ENCODE measurements at regions of chr2 and their contacts with region 1.

Region 1: GRCh38 chr2:48946449-48947048 is 191.0 kb upstream of the LHCGR start:
- DNase-seq: peak; percentile 2
- H3K4me3 Mint-ChIP-seq: no peak overlapping the region
- H3K27ac Mint-ChIP-seq: no peak overlapping the region
- H3K4me1 Mint-ChIP-seq: no peaks in the 10 kb centered on the region
- H3K27me3 Mint-ChIP-seq: peaks cover 2% of the 10 kb centered on the region

Region 2: GRCh38 chr2:50401772-50402653 is 1455.5 kb after region 1 on chr2:
- intact Hi-C with region 1: loop called (anchors 1 kb)
- DNase-seq: no peak
- H3K4me3 Mint-ChIP-seq: no peak overlapping the region
- H3K27ac Mint-ChIP-seq: no peak overlapping the region
- H3K4me1 Mint-ChIP-seq: no peaks in the 10 kb centered on the region
- H3K27me3 Mint-ChIP-seq: no peaks in the 10 kb centered on the region

Region 3: DNA sequence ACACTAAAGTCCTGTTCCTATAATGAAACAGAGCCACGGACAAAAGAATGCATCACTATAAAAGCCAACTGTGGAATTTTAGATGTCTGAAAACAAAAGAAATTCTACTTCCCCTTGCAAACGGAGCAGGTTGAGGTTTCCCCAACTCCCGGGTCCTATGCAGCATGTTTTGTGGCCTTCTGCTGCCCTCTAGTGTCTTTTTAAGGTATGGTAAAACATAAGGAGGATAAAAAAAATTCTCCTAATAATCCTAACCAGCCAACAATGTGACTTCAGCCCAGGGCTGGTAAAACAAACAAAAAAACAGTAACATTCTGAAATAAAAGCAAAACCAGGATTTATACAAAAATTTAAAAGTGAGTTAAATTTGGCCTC is 1545.9 kb after region 1 on chr2:
- intact Hi-C with region 1: loop called (anchors 1 kb)
- DNase-seq: no peak
- H3K4me3 Mint-ChIP-seq: no peak overlapping the region
- H3K27ac Mint-ChIP-seq: no peak overlapping the region
- H3K4me1 Mint-ChIP-seq: peaks cover 8% of the 10 kb centered on the region
- H3K27me3 Mint-ChIP-seq: no peaks in the 10 kb centered on the region